ENCODE measurements at regions of chr2 and their contacts with region 1.

Region 1: DNA sequence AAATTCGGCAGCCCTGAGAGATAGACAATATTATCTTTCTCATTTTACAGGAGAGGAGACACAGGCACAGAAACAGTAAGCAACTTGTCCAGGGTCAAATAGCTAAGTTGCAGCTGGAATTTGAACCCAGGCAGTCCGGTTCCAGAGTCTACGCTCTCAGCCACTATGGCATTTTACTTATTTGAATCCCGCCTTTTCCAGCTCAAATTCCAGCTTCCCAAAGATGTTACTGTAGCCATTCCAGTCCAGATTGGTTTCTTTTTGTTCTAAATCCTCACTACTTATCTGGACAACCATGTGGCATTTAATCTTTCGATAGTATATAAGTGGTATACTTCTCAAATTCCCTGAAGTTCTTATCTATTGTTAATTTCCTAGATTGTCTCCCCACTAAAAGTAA is 125.7 kb downstream of the NBAS start:
- DNase-seq: no peak
- CTCF ChIP-seq: no peak

Region 2: GRCh38 chr2:15421753-15422152 is 13.7 kb before region 1 on chr2:
- CTCF ChIA-PET with region 1: interaction called, 12 read pairs
- POLR2A ChIA-PET with region 1: no interaction called
- DNase-seq: no peak
- CTCF ChIP-seq: no peak

Region 3: GRCh38 chr2:15460112-15460620 is 24.7 kb after region 1 on chr2:
- CTCF ChIA-PET with region 1: no interaction called
- POLR2A ChIA-PET with region 1: no interaction called
- DNase-seq: no peak
- CTCF ChIP-seq: no peak

Measured in GM10248 (cell line).